Calu3 (cell line): ENCODE measurements at regions of chr12 and their contacts with region 1.

Region 1: GRCh38 chr12:48618541-48618940 is 48.7 kb upstream of the LALBA start:
- DNase-seq: peak; percentile 65
- H3K4me3 Mint-ChIP-seq: no peak overlapping the region
- H3K27ac Mint-ChIP-seq: no peak overlapping the region
- H3K4me1 Mint-ChIP-seq: no peaks in the 10 kb centered on the region
- H3K27me3 Mint-ChIP-seq: peaks cover 28% of the 10 kb centered on the region
- CTCF ChIP-seq: peak; percentile 85

Region 2: DNA sequence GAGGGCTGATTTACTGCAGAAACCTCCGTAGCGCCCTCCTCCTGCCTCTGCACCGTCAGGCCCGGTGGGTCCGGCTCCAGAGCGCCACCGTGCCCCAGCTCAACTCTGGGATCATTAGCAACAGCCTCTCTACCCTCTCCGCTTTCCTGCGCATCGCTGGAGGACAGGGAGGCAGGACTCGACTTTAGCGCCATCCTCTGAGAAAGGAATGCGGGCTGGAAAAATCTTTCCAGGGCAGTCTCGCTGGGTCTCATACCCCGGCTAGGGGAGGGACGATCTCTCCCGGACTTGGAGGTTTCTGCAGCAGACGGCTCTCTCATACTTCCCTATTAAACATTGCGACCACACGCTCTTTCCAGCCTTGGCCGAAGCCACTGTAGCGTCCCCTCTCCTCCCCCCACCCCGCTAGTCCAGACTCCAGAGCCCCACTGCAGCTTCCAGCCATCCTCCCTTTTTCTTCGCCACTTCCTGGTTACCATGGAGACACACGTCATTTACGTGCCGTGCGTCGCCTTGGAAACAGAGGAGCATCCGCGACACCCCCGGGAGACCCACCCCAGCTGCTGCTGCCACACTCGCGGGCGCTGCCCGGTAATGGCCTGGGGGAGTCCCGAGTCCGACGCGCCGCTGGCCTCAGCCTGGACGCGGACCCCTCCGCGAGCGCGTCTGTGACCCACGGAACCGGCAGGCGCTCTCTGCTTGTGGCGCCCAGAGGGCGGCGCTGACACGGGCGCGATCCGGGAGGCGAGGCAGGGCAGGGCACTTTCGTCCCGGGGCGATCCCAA is 435.3 kb before region 1 on chr12 and contains the start of gene CCDC184:
- CTCF ChIA-PET with region 1: interaction called, 3 read pairs
- intact Hi-C with region 1: loop called (anchors 10 kb)
- DNase-seq: peak; percentile 55
- H3K4me3 Mint-ChIP-seq: peak within 1 kb of the TSS; percentile 84
- H3K27ac Mint-ChIP-seq: peak within 1 kb of the TSS; percentile 30
- H3K4me1 Mint-ChIP-seq: peaks cover 10% of the 10 kb centered on the region
- H3K27me3 Mint-ChIP-seq: peaks cover 70% of the 10 kb centered on the region
- CTCF ChIP-seq: no peak
- total RNA-seq, gene CCDC184: 0.45 and 0.51 TPM in 2 replicates

Region 3: GRCh38 chr12:48512855-48513254 is 105.7 kb before region 1 on chr12:
- CTCF ChIA-PET with region 1: no interaction called
- intact Hi-C with region 1: no loop called
- DNase-seq: no peak
- H3K4me3 Mint-ChIP-seq: no peak overlapping the region
- H3K27ac Mint-ChIP-seq: no peak overlapping the region
- H3K4me1 Mint-ChIP-seq: no peaks in the 10 kb centered on the region
- H3K27me3 Mint-ChIP-seq: peaks cover 40% of the 10 kb centered on the region
- CTCF ChIP-seq: no peak

Region 4: GRCh38 chr12:48542300-48542928 is 76.1 kb before region 1 on chr12:
- CTCF ChIA-PET with region 1: interaction called, 30 read pairs
- intact Hi-C with region 1: loop called (anchors 1 kb)
- DNase-seq: peak; percentile 60
- H3K4me3 Mint-ChIP-seq: no peak overlapping the region
- H3K27ac Mint-ChIP-seq: no peak overlapping the region
- H3K4me1 Mint-ChIP-seq: peaks cover 8% of the 10 kb centered on the region
- H3K27me3 Mint-ChIP-seq: peaks cover 8% of the 10 kb centered on the region
- CTCF ChIP-seq: peak; percentile 29